CD8-positive, alpha-beta T cell (primary cell): ENCODE measurements at regions of chr6 and their contacts with region 1.

Region 1: DNA sequence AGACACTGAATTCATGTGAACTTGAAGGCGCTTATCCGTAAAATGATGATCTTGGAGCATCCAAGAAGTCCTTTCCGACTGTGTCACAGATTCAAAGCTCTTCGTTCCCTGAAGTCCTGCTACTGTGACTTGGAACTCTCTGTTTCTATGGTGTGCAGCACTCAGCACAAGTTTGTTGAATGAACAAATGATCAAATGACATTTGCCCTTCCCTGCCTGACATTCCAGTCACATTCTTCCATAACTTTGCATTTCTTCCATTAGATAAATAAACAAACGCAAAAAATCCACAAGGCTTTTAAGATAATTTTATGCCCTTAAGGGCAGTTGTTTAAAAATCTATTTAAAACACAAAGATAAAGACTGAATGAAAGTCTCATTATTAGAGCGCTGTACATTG is 39.9 kb downstream of the SGK1 start:
- DNase-seq: no peak
- ATAC-seq: no peak
- H3K4me3 ChIP-seq: no peak overlapping the region
- H3K4me3 Mint-ChIP-seq: no peak overlapping the region
- H3K27ac ChIP-seq: no peak overlapping the region
- H3K27ac Mint-ChIP-seq: no peak overlapping the region
- H3K4me1 ChIP-seq: peaks cover 28% of the 10 kb centered on the region
- H3K4me1 Mint-ChIP-seq: peaks cover 31% of the 10 kb centered on the region
- H3K27me3 ChIP-seq: no peaks in the 10 kb centered on the region
- H3K27me3 Mint-ChIP-seq: no peaks in the 10 kb centered on the region
- CTCF ChIP-seq: no peak

Region 2: GRCh38 chr6:134196568-134197193 is 81.3 kb before region 1 on chr6:
- CTCF ChIA-PET with region 1: no interaction called
- POLR2A ChIA-PET with region 1: interaction called, 4 read pairs
- intact Hi-C with region 1: loop called in 1 of 2 experiments (anchors 5 kb)
- DNase-seq: no peak
- ATAC-seq: no peak
- H3K4me3 ChIP-seq: no peak overlapping the region
- H3K4me3 Mint-ChIP-seq: no peak overlapping the region
- H3K27ac ChIP-seq: no peak overlapping the region
- H3K27ac Mint-ChIP-seq: no peak overlapping the region
- H3K4me1 ChIP-seq: no peaks in the 10 kb centered on the region
- H3K4me1 Mint-ChIP-seq: peaks cover 12% of the 10 kb centered on the region
- H3K27me3 ChIP-seq: no peaks in the 10 kb centered on the region
- H3K27me3 Mint-ChIP-seq: no peaks in the 10 kb centered on the region
- CTCF ChIP-seq: no peak

Region 3: GRCh38 chr6:134235937-134236751 is 41.9 kb before region 1 on chr6:
- CTCF ChIA-PET with region 1: no interaction called
- POLR2A ChIA-PET with region 1: no interaction called
- intact Hi-C with region 1: loop called in 1 of 2 experiments (anchors 5 kb)
- DNase-seq: peak in 2 of 9 experiments; percentile 50 to 69
- ATAC-seq: peak; percentile 38
- H3K4me3 ChIP-seq: no peak overlapping the region
- H3K4me3 Mint-ChIP-seq: no peak overlapping the region
- H3K27ac ChIP-seq: no peak overlapping the region
- H3K27ac Mint-ChIP-seq: no peak overlapping the region
- H3K4me1 ChIP-seq: peaks cover 24% of the 10 kb centered on the region
- H3K4me1 Mint-ChIP-seq: peaks cover 33% of the 10 kb centered on the region
- H3K27me3 ChIP-seq: no peaks in the 10 kb centered on the region
- H3K27me3 Mint-ChIP-seq: no peaks in the 10 kb centered on the region
- CTCF ChIP-seq: no peak